Left ventricle myocardium superior (tissue), 1 donor: ENCODE measurements at regions of chr15 and their contacts with region 1.

Region 1: DNA sequence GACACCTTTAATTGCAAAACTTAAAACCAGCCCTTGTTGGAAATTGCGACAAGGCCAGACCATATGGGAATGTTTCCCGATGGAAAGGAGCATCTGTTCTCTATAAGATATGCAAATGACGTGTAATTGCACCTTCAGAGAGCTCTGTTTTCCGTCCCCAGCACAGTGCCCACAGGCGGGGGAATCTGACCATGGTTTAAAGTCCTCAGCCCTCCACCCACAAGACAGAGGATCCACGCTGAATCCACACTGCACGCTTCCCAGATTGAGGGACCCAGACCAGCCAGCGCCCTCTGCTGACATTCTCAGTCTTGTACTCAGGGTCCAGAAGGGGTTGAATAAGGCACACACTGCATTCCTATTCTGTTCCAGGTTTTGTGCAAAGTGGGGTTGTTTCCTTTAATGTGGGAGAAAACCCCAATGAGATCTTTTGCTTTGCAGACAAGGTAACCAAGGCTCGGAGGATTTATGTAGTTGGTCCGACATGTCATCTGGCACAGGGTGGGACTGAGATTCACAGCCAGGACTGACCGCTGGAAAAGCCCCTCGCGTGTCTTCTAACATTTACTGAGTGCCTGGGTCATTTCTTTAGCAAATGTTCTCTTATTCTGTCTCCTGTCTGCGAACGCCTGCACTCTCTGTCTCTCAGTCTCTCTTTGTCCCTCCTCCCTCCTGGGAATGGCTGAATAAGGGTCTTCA is 36.8 kb upstream of the KLHL25 start:
- DNase-seq: peak; percentile 74
- ATAC-seq: peak; percentile 92

Region 2: GRCh38 chr15:85730001-85730820 is 101.4 kb before region 1 on chr15:
- intact Hi-C with region 1: loop called (anchors 5 kb)
- DNase-seq: no peak
- ATAC-seq: peak; percentile 58

Region 3: GRCh38 chr15:85899927-85900326 is 68.4 kb after region 1 on chr15:
- intact Hi-C with region 1: no loop called
- DNase-seq: no peak
- ATAC-seq: no peak